ENCODE measurements at regions of chr3 and their contacts with region 1.

Region 1: DNA sequence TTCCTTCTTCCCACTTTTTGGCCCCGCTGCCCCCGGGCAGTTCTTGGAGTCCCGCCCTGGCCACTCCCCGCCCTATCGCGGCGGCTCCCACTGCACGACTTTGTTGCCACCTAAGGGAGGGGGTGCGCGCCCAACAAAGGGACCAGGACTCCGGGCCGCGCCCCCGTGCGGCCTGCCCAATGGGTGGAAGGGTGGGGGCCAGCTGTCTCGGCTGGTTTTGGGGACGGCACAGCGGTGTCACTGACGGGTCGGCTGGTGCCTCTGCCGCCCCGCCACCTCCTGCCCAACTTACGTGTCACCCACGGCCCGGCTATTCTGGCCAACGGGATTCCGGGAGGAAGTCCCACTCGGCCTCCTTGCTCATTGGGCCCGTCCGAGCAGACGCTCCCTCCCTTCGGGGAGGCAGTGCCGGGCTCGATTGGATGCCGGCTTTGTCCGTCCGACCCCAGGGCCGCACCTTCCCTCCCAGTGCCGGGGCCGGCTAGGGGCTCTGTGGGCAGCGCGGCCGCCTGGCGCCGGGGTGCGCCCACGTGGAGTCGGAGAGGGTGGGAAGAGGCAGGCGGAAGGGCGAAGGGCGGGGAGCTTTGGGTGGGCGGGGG is at the start of gene GOLIM4:
- DNase-seq: peak; percentile 97
- H3K4me3 ChIP-seq: peak within 1 kb of the TSS; percentile 49 to 82 (median 78)
- H3K27ac ChIP-seq: peak within 1 kb of the TSS; percentile 73
- H3K4me1 ChIP-seq: peaks cover 21% of the 10 kb centered on the region
- H3K27me3 ChIP-seq: no peaks in the 10 kb centered on the region
- CTCF ChIP-seq: no peak
- POLR2A ChIP-seq: peak; percentile 72
- total RNA-seq, gene GOLIM4: 39.7 and 40.8 TPM in 2 replicates

Region 2: DNA sequence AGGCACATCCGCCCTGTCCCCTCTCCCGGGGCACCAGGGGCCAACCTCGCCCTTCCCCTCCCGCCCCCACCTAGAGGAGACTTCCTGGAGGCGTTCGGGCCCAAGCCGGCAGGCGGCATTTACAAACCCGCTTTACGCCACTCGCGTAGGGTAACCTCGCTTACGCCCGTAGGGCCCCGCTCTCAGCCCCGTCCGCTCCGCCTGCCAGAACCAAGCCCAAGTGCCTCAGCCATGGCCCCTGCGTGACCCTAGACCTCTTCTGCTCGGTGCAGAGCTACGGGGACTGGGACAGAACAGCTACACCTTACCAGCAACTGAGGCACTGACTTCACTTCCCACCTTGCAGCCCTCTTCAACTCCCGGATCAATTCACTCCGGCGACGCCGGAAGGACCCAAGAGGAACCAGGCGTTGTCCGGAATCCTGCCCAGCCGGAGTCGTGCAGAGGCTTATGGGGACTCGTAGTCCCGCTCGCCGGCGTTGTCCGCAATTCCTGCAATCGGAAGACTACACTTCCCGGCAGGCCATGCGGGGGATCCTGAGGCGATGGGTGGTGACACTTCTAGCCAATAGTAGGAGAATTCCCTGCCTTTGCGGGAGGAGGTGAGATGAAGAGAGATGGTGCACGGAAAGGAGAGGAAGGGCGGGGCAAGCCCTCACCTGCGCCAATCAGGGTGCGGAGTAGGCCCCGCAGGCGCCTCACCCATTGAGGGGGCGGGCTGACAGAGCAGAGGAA is 361.0 kb before region 1 on chr3 and contains the start of gene PDCD10:
- CTCF ChIA-PET with region 1: no interaction called
- POLR2A ChIA-PET with region 1: no interaction called
- dilution Hi-C with region 1: no loop called
- intact Hi-C with region 1: loop called (anchors 5 kb)
- DNase-seq: peak; percentile 97
- H3K4me3 ChIP-seq: peak within 1 kb of the TSS; percentile 48 to 66 (median 61)
- H3K27ac ChIP-seq: peak within 1 kb of the TSS; percentile 21
- H3K4me1 ChIP-seq: peaks cover 10% of the 10 kb centered on the region
- H3K27me3 ChIP-seq: peaks cover 0 to 9% of the 10 kb centered on the region in 2 experiments
- CTCF ChIP-seq: peak in 1 of 2 donors; percentile 8
- POLR2A ChIP-seq: peak; percentile 65
- total RNA-seq, gene PDCD10: 47.8 and 50.1 TPM in 2 replicates

Region 3: DNA sequence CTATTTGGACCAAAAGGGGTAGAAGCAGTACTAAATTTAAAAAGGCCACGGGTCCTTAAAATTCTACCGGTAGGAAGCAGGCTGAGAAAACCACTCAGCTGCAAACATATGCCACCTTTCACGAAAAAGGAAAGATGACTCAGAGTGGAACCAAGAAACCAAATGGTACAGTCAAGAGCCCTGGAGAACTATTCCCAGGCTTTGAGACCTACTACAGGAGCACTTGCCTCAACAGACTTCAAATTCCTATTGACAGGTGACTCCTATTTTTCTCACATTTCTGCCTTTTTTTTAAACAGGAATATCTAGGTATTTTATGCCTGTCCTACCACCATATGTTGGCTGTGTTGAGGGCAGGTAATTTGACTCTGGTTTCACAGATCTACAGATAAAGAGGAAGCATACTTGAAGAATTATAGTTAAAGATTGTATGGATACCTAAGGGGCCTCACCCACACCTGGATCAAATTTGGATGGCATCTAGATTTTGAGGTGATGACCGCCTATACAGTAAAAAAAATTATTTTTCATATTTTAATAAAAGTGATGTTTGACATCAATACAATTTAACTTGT is 10.1 kb before region 1 on chr3:
- CTCF ChIA-PET with region 1: interaction called, 5 read pairs
- POLR2A ChIA-PET with region 1: no interaction called
- dilution Hi-C with region 1: no loop called
- intact Hi-C with region 1: loop called (anchors 1 kb)
- DNase-seq: no peak
- H3K4me3 ChIP-seq: no peak overlapping the region
- H3K27ac ChIP-seq: no peak overlapping the region
- H3K4me1 ChIP-seq: peaks cover 20% of the 10 kb centered on the region
- H3K27me3 ChIP-seq: no peaks in the 10 kb centered on the region
- CTCF ChIP-seq: no peak
- POLR2A ChIP-seq: no peak

Region 4: DNA sequence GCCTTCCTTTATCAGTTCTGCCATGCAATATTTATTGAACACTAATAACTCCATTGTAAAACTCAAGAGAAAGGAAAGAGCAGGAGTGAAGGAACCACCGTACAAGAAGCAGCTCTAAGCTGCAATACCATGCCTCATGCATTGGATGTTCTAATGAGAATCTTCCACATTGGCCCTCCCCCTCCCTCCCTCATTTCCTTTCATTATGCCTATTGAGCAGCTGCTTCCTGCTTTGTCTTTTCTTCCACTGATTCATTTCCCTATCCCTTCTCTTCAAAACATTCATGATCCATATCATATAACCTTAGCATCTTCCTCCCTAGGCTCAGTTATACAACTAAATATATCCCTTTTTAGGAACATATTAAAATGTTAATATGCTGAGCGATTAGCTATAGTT is 698.7 kb after region 1 on chr3:
- CTCF ChIA-PET with region 1: no interaction called
- POLR2A ChIA-PET with region 1: no interaction called
- dilution Hi-C with region 1: no loop called
- intact Hi-C with region 1: loop called (anchors 10 kb)
- DNase-seq: peak; percentile 93
- H3K4me3 ChIP-seq: no peak overlapping the region
- H3K27ac ChIP-seq: peak overlapping the region; percentile 75
- H3K4me1 ChIP-seq: peaks cover 23% of the 10 kb centered on the region
- H3K27me3 ChIP-seq: no peaks in the 10 kb centered on the region
- CTCF ChIP-seq: no peak
- POLR2A ChIP-seq: peak; percentile 74

Measured in endothelial cell of umbilical vein (primary cell).